HEK293 (cell line): ENCODE measurements at regions of chr19 and their contacts with region 1.

Region 1: DNA sequence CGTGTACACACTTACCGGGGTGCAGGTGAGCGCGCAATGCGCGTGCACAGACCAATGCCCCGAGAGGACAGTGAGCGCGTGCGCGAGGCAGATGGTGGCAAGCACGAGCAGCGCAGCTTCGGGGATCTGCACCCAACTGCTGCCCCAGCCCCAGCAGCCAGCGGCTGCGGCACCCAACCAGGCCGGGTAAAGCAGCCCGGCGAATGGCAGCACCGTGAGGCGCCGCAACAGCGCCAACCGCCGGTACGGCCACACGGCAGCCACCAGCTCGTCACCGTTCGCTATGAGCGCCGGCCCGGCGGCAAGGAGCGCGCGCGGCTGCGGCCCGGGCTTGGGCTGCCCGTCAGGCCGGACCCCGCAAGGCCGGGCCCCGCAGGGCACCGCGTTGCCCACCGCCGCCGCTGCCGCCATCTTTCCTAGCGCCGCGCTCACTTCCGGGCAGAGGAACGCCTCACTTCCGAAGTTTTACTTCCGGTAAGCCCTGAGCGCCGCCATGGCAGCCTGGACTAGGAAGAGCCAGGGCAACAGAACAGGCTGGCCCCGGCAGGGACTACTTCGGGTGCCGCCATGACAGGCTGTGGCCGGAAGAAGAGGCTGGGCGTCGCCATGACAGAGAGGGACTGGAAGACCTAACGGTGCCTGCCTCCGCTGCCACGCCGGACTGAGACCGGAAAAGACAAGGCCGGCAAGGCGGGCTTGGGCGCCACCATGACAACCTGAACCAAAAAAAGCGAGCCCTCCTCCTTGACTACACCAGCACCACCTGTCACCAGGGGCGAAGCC is at the start of gene ATP13A1:
- H3K4me3 ChIP-seq: peak within 1 kb of the TSS; percentile 99
- H3K27ac ChIP-seq: peak within 1 kb of the TSS; percentile 67; the same call in 1 of the 2 replicates
- H3K4me1 ChIP-seq: peaks cover 3% of the 10 kb centered on the region; the same call in 1 of the 2 replicates
- CTCF ChIP-seq: no peak

Region 2: DNA sequence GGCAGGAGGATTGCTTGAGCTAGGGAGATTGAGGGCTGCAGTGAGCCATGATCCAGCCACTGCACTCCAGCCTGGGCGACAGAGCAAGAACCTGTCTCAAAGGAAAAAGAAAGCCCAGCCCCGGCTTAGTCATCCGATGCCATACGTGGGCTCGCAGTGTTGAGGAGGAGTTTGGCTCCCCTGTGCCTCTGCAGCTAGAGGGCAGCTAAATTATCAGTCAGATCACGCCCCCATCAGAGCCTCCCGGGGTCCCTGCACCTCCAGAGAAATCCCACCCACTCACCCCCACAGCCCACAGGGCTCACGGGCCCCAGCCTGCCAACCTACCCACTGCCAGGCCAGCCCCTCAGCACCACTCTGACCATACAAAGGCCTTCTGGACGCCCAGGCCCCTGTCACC is 315.2 kb before region 1 on chr19:
- CTCF ChIA-PET with region 1: no interaction called
- POLR2A ChIA-PET with region 1: no interaction called
- H3K4me3 ChIP-seq: no peak overlapping the region
- H3K27ac ChIP-seq: no peak overlapping the region
- H3K4me1 ChIP-seq: no peaks in the 10 kb centered on the region
- CTCF ChIP-seq: no peak

Region 3: GRCh38 chr19:19652456-19653295 is 10.8 kb before region 1 on chr19:
- CTCF ChIA-PET with region 1: interaction called, 4 read pairs
- POLR2A ChIA-PET with region 1: interaction called, 10 read pairs
- H3K4me3 ChIP-seq: no peak overlapping the region
- H3K27ac ChIP-seq: no peak overlapping the region
- H3K4me1 ChIP-seq: no peaks in the 10 kb centered on the region
- CTCF ChIP-seq: no peak

Region 4: GRCh38 chr19:19677579-19677978 is 14.1 kb after region 1 on chr19:
- CTCF ChIA-PET with region 1: no interaction called
- POLR2A ChIA-PET with region 1: no interaction called
- H3K4me3 ChIP-seq: no peak overlapping the region
- H3K27ac ChIP-seq: no peak overlapping the region
- H3K4me1 ChIP-seq: no peaks in the 10 kb centered on the region
- CTCF ChIP-seq: no peak

Region 5: GRCh38 chr19:19696386-19696785 is 32.9 kb after region 1 on chr19:
- CTCF ChIA-PET with region 1: no interaction called
- POLR2A ChIA-PET with region 1: no interaction called
- H3K4me3 ChIP-seq: no peak overlapping the region
- H3K27ac ChIP-seq: no peak overlapping the region
- H3K4me1 ChIP-seq: no peaks in the 10 kb centered on the region
- CTCF ChIP-seq: no peak